T-cell (primary cell): ENCODE measurements at regions of chr6 and their contacts with region 1.

Region 1: GRCh38 chr6:151461673-151462072 is 9.7 kb upstream of the RMND1 start:
- DNase-seq: no peak
- ATAC-seq: no peak
- H3K4me3 ChIP-seq: no peak overlapping the region
- H3K4me3 Mint-ChIP-seq: no peak overlapping the region
- H3K27ac ChIP-seq: no peak overlapping the region
- H3K27ac Mint-ChIP-seq: no peak overlapping the region
- H3K4me1 ChIP-seq: no peaks in the 10 kb centered on the region
- H3K4me1 Mint-ChIP-seq: peaks cover 17 to 28% (median 23%) of the 10 kb centered on the region in 3 donors
- H3K27me3 ChIP-seq: no peaks in the 10 kb centered on the region
- H3K27me3 Mint-ChIP-seq: no peaks in the 10 kb centered on the region

Region 2: DNA sequence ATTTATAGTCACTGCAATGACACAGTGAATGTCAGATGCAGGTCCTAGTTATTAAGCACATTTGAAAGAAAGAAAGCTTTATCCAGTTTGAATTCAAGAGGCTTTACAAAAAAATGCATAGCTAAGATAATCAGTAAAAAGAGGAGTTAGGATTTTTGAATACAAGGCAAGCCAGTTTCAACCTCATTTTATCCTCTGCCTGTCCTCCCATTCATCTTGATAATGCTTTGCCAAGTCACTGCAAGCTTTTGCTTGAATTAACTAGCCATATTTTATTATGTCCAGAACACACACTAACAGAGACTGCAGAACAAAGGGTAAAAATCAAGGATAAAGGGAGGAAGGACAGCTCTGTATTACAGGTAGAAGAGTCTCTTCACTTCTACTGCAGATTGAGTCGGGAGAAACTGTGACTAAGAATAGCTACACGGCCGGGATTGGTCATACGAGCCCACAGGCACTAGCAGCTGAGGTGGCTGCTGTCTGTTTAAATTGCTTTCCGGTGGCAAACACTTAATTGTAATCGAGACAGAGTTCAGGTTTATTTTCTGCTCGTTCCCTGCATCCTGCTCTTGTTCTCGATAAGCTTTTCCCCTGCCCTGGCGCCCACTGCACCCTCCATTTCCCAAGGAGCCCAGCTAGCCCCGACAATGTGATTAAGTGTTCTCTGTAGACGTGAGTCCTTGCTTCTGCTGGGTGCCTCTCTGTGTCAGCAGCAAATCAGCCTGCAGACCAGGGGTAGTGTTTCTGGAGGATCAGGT is 252.4 kb before region 1 on chr6:
- CTCF ChIA-PET with region 1: no interaction called
- POLR2A ChIA-PET with region 1: interaction called in 1 of 2 experiments, 13 read pairs
- DNase-seq: no peak
- ATAC-seq: no peak
- H3K4me3 ChIP-seq: no peak overlapping the region
- H3K4me3 Mint-ChIP-seq: no peak overlapping the region
- H3K27ac ChIP-seq: no peak overlapping the region
- H3K27ac Mint-ChIP-seq: no peak overlapping the region
- H3K4me1 ChIP-seq: no peaks in the 10 kb centered on the region
- H3K4me1 Mint-ChIP-seq: no peaks in the 10 kb centered on the region
- H3K27me3 ChIP-seq: peaks cover 0 to 9% of the 10 kb centered on the region in 2 experiments
- H3K27me3 Mint-ChIP-seq: peaks cover 17 to 27% of the 10 kb centered on the region in 2 donors

Region 3: GRCh38 chr6:151349651-151350282 is 111.9 kb before region 1 on chr6:
- CTCF ChIA-PET with region 1: no interaction called
- POLR2A ChIA-PET with region 1: no interaction called
- DNase-seq: no peak
- ATAC-seq: no peak
- H3K4me3 ChIP-seq: no peak overlapping the region
- H3K4me3 Mint-ChIP-seq: no peak overlapping the region
- H3K27ac ChIP-seq: no peak overlapping the region
- H3K27ac Mint-ChIP-seq: no peak overlapping the region
- H3K4me1 ChIP-seq: peaks cover 0 to 7% of the 10 kb centered on the region in 2 experiments
- H3K4me1 Mint-ChIP-seq: no peaks in the 10 kb centered on the region
- H3K27me3 ChIP-seq: no peaks in the 10 kb centered on the region
- H3K27me3 Mint-ChIP-seq: peaks cover 0 to 5% of the 10 kb centered on the region in 2 donors

Region 4: GRCh38 chr6:151512481-151512880 is 50.8 kb after region 1 on chr6:
- CTCF ChIA-PET with region 1: no interaction called
- POLR2A ChIA-PET with region 1: no interaction called
- DNase-seq: peak in 1 of 35 experiments; percentile 2
- ATAC-seq: no peak
- H3K4me3 ChIP-seq: no peak overlapping the region
- H3K4me3 Mint-ChIP-seq: no peak overlapping the region
- H3K27ac ChIP-seq: no peak overlapping the region
- H3K27ac Mint-ChIP-seq: no peak overlapping the region
- H3K4me1 ChIP-seq: no peaks in the 10 kb centered on the region
- H3K4me1 Mint-ChIP-seq: no peaks in the 10 kb centered on the region
- H3K27me3 ChIP-seq: no peaks in the 10 kb centered on the region
- H3K27me3 Mint-ChIP-seq: peaks cover 0 to 5% of the 10 kb centered on the region in 2 donors